ENCODE measurements at regions of chr11 and their contacts with region 1.

Region 1: DNA sequence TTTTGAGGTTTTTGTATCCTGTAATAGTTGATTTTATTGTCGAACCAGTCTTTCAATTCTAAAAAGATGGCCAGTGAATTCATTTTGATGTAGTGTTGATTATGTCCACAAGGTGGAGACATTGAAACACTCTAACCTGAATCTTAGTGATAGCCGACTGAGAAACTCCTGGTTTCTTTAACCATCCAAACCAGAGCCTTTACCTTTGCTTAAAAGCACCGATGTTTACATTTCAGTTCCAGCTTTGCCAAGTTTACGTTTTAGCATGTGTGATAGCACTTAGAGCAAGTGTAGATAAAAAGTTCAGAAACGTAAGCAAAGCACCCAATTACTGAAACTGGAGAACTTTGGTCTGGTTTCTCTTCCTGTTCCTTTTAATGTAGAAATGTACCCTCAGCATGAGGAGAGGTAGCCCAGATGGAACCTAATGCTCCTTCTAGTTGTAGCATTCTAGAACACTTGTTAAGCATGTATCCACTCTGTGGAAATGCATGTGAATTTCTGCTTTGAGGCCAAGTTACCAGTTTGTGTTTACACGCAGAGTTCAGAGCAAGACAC is 208.6 kb downstream of the DBX1 start:
- H3K4me3 ChIP-seq: no peak overlapping the region
- H3K27ac ChIP-seq: peak overlapping the region; percentile 48
- H3K4me1 ChIP-seq: peaks cover 12% of the 10 kb centered on the region
- CTCF ChIP-seq: no peak

Region 2: DNA sequence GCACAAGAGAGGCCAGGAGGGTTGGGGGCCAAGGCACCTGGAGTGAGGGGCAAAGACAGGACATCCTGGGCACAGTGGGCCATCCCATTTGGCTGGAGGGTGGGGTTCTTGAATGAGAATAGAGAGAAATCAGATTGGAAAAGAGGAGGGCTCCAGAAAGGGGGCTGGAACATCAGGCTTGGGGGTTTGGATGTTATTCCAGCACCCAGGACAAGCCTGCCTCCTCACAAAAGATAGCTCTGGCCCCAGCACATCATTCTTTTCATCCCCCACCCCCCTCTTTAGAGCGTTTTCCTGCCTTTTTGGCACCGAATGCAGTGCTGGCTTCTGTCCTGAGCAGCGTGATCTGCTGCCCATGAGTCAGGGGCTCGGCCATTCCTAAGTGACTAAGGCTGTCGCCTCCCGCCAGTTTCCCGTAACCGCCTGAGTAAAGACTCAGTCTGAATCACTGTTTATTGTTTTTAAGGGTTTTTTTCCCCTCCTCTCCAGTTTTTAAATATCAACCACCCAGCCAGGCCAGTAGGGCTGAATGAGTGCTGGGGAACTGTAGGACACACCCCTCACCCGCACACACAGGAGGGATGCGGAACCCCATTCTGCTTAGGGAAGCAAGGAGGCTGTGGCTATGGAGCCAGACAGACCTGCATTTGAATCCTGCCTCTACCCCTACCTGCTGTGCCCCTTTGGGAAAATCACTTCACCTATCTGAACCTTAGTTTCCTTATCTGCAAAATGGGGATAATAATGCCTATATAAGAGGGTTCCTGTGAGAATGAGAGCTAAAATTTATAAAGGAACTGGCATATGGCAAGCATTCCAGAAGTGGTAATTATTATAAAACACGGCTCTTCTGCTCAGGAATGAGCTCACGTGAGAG is 271.4 kb before region 1 on chr11:
- CTCF ChIA-PET with region 1: no interaction called
- POLR2A ChIA-PET with region 1: no interaction called
- H3K4me3 ChIP-seq: no peak overlapping the region
- H3K27ac ChIP-seq: no peak overlapping the region
- H3K4me1 ChIP-seq: no peaks in the 10 kb centered on the region
- CTCF ChIP-seq: no peak

Region 3: GRCh38 chr11:20097319-20098221 is 145.9 kb after region 1 on chr11:
- CTCF ChIA-PET with region 1: interaction called, 10 read pairs
- POLR2A ChIA-PET with region 1: no interaction called
- H3K4me3 ChIP-seq: no peak overlapping the region
- H3K27ac ChIP-seq: no peak overlapping the region; the same call in 1 of the 2 replicates
- H3K4me1 ChIP-seq: peaks cover 9% of the 10 kb centered on the region
- CTCF ChIP-seq: no peak

Measured in HEK293 (cell line).